Prostate gland (tissue), 2 donors: ENCODE measurements at regions of chr2 and their contacts with region 1.

Region 1: DNA sequence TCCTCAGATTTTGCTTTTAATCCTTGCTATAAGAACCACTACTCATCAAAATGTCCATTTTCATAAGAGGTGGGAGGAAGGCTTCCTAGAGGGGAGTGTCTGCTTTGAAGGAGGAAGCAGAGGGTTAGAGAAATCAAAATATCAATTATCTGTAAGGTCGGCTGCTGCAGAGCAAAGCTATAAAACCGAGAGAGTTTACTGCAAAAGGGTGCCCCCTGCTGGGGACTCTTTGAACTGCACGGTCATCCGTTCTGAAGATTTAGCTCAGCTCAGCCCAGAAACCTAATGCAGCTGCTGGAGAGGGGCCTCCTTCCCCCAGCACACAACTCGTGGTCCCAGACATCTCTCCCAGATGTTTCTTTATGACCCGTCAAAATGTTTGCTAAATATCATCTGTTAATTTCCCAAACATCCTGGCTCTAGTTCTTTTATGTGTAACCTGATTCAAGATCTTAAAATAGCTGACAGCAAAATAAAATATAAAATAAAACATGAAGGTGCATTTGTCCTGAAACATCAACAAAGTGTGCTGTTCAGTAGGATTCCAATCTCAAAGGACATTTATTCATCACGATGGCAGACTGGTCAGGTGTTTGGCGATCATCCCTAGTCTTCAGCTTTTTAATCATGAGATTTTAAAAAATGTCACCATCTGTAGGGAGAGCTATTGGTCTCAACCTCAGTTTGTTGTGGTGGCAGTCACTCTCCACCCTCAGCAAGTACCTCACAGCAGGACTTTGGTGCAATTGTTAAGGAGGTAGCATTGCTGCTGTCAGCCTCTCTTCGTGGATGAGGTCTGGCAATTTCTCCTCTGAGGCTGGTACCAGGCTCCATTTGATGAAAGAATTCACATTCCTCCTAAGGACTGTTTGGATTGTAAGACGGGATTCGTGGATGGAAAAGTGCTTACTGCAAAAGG is 185.9 kb downstream of the MTX2 start:
- DNase-seq: peak; percentile 77
- H3K4me3 ChIP-seq: no peak overlapping the region
- H3K27ac ChIP-seq: no peak overlapping the region
- H3K4me1 ChIP-seq: no peaks in the 10 kb centered on the region
- H3K27me3 ChIP-seq: no peaks in the 10 kb centered on the region
- CTCF ChIP-seq: peak; percentile 80 to 97 (median 90)
- POLR2A ChIP-seq: no peak

Region 2: GRCh38 chr2:176554101-176555048 is 99.2 kb after region 1 on chr2:
- intact Hi-C with region 1: loop called (anchors 5 kb)
- DNase-seq: no peak
- H3K4me3 ChIP-seq: peak overlapping the region; percentile 22 to 24
- H3K27ac ChIP-seq: peak overlapping the region in 1 of 2 donors; percentile 19
- H3K4me1 ChIP-seq: no peaks in the 10 kb centered on the region
- H3K27me3 ChIP-seq: no peaks in the 10 kb centered on the region
- CTCF ChIP-seq: peak; percentile 55 to 88 (median 71)
- POLR2A ChIP-seq: no peak

Region 3: GRCh38 chr2:176638167-176639015 is 183.2 kb after region 1 on chr2:
- intact Hi-C with region 1: loop called (anchors 5 kb)
- DNase-seq: peak; percentile 61
- H3K4me3 ChIP-seq: peak overlapping the region; percentile 25 to 41
- H3K27ac ChIP-seq: no peak overlapping the region
- H3K4me1 ChIP-seq: peaks cover 6% of the 10 kb centered on the region
- H3K27me3 ChIP-seq: peaks cover 21% of the 10 kb centered on the region
- CTCF ChIP-seq: peak; percentile 41 to 85 (median 65)
- POLR2A ChIP-seq: no peak